IMR-90 (cell line): ENCODE measurements at regions of chr6 and their contacts with region 1.

Region 1: DNA sequence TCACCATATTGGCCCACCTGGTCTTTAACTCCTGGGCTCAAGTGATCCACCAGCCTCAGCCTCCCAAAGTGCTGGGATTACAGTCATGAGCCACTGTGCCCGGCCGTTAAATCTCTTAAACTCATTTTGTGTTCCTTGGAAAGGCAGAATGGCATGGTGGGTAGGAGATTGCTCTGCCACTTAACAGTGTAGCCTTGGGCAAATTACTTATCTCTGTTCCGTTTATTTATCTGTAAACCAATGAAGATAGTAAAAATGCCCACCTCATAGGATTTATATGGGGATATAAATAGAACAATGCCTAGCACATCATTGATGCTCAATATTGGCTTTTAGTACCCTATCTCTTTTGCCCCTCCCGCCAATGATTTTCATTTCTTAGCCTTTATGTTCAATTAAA is 7.2 kb upstream of the PIM1 start:
- DNase-seq: no peak
- ATAC-seq: no peak
- H3K4me3 ChIP-seq: no peak overlapping the region
- H3K27ac ChIP-seq: no peak overlapping the region
- H3K4me1 ChIP-seq: peaks cover 4% of the 10 kb centered on the region
- H3K27me3 ChIP-seq: no peaks in the 10 kb centered on the region
- CTCF ChIP-seq: no peak
- POLR2A ChIP-seq: no peak
- RAD21 ChIP-seq: no peak

Region 2: DNA sequence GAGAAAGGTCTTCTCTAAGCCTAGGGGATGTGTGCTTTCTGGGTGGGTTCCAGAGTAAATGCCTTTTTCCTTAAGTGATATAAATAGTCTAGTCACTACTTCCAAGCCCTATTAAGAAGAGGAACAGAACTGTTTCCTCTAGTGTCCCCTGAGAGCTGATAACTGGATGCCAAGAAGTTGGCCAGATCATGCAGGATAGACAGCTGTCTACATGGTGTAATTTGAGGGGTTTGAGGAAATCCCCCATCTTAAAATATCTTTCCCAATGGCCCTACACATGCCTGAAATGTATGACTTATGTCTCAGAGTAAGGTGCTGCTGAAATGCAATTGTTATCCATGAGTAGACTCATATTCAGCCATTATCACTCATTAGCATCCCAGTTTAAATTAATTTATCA is 13.0 kb before region 1 on chr6:
- CTCF ChIA-PET with region 1: interaction called, 11 read pairs
- POLR2A ChIA-PET with region 1: no interaction called
- dilution Hi-C with region 1: no loop called
- in situ Hi-C with region 1: no loop called
- intact Hi-C with region 1: no loop called
- DNase-seq: no peak
- ATAC-seq: no peak
- H3K4me3 ChIP-seq: no peak overlapping the region
- H3K27ac ChIP-seq: no peak overlapping the region
- H3K4me1 ChIP-seq: peaks cover 7% of the 10 kb centered on the region
- H3K27me3 ChIP-seq: no peaks in the 10 kb centered on the region
- CTCF ChIP-seq: no peak
- POLR2A ChIP-seq: no peak
- RAD21 ChIP-seq: no peak